GM18951 (cell line): ENCODE measurements at regions of chr17 and their contacts with region 1.

Region 1: GRCh38 chr17:72120642-72121163 is at the start of gene SOX9:
- POLR2A ChIP-seq: peak; percentile 84

Region 2: GRCh38 chr17:70636517-70637133 is 1484.1 kb before region 1 on chr17:
- in situ Hi-C with region 1: loop called (anchors 25 kb)
- POLR2A ChIP-seq: no peak

Region 3: GRCh38 chr17:71472809-71473789 is 647.6 kb before region 1 on chr17:
- in situ Hi-C with region 1: loop called (anchors 25 kb)
- POLR2A ChIP-seq: no peak

Region 4: GRCh38 chr17:72030067-72030899 is 90.4 kb before region 1 on chr17:
- in situ Hi-C with region 1: no loop called
- POLR2A ChIP-seq: peak; percentile 54

Region 5: GRCh38 chr17:72539981-72540897 is 419.5 kb after region 1 on chr17:
- in situ Hi-C with region 1: loop called (anchors 25 kb)
- POLR2A ChIP-seq: no peak